MCF 10A (cell line): ENCODE measurements at regions of chr2 and their contacts with region 1.

Region 1: GRCh38 chr2:47323009-47323821 is 79.7 kb upstream of the MSH2 start:
- DNase-seq: peak; percentile 73
- H3K4me3 Mint-ChIP-seq: no peak overlapping the region
- H3K27ac Mint-ChIP-seq: no peak overlapping the region
- H3K4me1 Mint-ChIP-seq: no peaks in the 10 kb centered on the region
- H3K27me3 Mint-ChIP-seq: no peaks in the 10 kb centered on the region
- CTCF ChIP-seq: peak; percentile 97

Region 2: DNA sequence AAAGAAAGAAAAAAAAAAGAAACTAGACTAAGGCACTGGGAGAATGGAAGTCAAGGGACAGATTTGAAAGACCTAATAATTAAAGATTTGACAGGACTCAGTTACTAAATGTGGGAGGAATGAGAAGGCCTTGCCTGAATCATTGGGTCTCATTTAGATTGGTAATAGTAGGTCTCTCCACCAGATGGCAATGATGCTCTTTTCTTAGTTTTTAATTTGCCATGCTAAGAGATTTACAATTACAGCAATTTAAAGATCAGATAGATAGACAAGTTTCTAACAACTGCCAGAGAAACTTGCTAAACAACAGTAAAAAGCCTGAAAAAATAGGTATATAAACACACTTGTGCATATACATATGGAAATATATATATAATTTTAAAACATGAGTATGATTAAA is 690.9 kb before region 1 on chr2:
- CTCF ChIA-PET with region 1: interaction called, 3 read pairs
- POLR2A ChIA-PET with region 1: no interaction called
- intact Hi-C with region 1: loop called (anchors 1 kb)
- DNase-seq: peak; percentile 68
- H3K4me3 Mint-ChIP-seq: no peak overlapping the region
- H3K27ac Mint-ChIP-seq: no peak overlapping the region
- H3K4me1 Mint-ChIP-seq: no peaks in the 10 kb centered on the region
- H3K27me3 Mint-ChIP-seq: no peaks in the 10 kb centered on the region
- CTCF ChIP-seq: peak; percentile 56

Region 3: DNA sequence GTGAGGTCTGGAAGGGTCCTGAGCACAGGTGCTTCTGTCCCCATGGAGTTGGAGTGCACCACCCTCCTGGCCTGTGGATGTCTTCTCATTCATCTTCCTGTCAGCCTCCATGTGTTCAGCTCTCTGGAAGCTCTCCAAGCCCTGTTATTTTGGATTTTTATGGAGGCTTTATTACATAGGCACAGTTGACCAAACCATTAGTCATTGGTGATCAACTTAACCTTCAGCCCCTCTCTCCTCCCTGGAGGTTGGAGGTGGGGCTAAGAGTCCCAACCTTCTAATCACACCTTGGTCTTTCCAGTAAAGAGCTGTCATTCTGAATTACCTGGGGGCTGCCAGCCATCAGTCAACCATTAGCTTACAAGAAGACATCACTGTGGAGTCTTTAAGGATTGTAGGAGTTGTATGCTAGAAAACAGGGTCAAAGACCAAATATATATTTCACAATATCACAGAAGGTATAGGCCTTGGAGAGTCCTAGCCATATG is 400.1 kb before region 1 on chr2:
- CTCF ChIA-PET with region 1: interaction called, 20 read pairs
- POLR2A ChIA-PET with region 1: no interaction called
- intact Hi-C with region 1: loop called (anchors 1 kb)
- DNase-seq: peak; percentile 68
- H3K4me3 Mint-ChIP-seq: no peak overlapping the region
- H3K27ac Mint-ChIP-seq: no peak overlapping the region
- H3K4me1 Mint-ChIP-seq: peaks cover 15% of the 10 kb centered on the region
- H3K27me3 Mint-ChIP-seq: no peaks in the 10 kb centered on the region
- CTCF ChIP-seq: no peak

Region 4: GRCh38 chr2:47043142-47043890 is 279.9 kb before region 1 on chr2:
- CTCF ChIA-PET with region 1: interaction called, 10 read pairs
- POLR2A ChIA-PET with region 1: no interaction called
- intact Hi-C with region 1: no loop called
- DNase-seq: peak; percentile 94
- H3K4me3 Mint-ChIP-seq: peak overlapping the region; percentile 52
- H3K27ac Mint-ChIP-seq: peak overlapping the region; percentile 94
- H3K4me1 Mint-ChIP-seq: peaks cover 37% of the 10 kb centered on the region
- H3K27me3 Mint-ChIP-seq: no peaks in the 10 kb centered on the region
- CTCF ChIP-seq: no peak

Region 5: GRCh38 chr2:47195149-47195548 is 128.1 kb before region 1 on chr2:
- CTCF ChIA-PET with region 1: interaction called, 11 read pairs
- POLR2A ChIA-PET with region 1: no interaction called
- intact Hi-C with region 1: no loop called
- DNase-seq: peak; percentile 87
- H3K4me3 Mint-ChIP-seq: no peak overlapping the region
- H3K27ac Mint-ChIP-seq: peak overlapping the region; percentile 33
- H3K4me1 Mint-ChIP-seq: peaks cover 65% of the 10 kb centered on the region
- H3K27me3 Mint-ChIP-seq: no peaks in the 10 kb centered on the region
- CTCF ChIP-seq: no peak

Region 6: GRCh38 chr2:47307066-47307465 is 16.1 kb before region 1 on chr2:
- CTCF ChIA-PET with region 1: interaction called, 16 read pairs
- POLR2A ChIA-PET with region 1: no interaction called
- intact Hi-C with region 1: no loop called
- DNase-seq: peak; percentile 3
- H3K4me3 Mint-ChIP-seq: no peak overlapping the region
- H3K27ac Mint-ChIP-seq: no peak overlapping the region
- H3K4me1 Mint-ChIP-seq: peaks cover 12% of the 10 kb centered on the region
- H3K27me3 Mint-ChIP-seq: no peaks in the 10 kb centered on the region
- CTCF ChIP-seq: no peak